Caco-2 (cell line): ENCODE measurements at regions of chr17 and their contacts with region 1.

Region 1: GRCh38 chr17:49616601-49617131 is 41.0 kb downstream of the NXPH3 start:
- DNase-seq: no peak
- H3K4me3 ChIP-seq: no peak overlapping the region
- H3K4me3 Mint-ChIP-seq: no peak overlapping the region
- H3K27ac Mint-ChIP-seq: no peak overlapping the region
- H3K4me1 ChIP-seq: peaks cover 20% of the 10 kb centered on the region
- H3K4me1 Mint-ChIP-seq: peaks cover 12% of the 10 kb centered on the region
- H3K27me3 ChIP-seq: no peaks in the 10 kb centered on the region
- H3K27me3 Mint-ChIP-seq: no peaks in the 10 kb centered on the region
- CTCF ChIP-seq: no peak

Region 2: DNA sequence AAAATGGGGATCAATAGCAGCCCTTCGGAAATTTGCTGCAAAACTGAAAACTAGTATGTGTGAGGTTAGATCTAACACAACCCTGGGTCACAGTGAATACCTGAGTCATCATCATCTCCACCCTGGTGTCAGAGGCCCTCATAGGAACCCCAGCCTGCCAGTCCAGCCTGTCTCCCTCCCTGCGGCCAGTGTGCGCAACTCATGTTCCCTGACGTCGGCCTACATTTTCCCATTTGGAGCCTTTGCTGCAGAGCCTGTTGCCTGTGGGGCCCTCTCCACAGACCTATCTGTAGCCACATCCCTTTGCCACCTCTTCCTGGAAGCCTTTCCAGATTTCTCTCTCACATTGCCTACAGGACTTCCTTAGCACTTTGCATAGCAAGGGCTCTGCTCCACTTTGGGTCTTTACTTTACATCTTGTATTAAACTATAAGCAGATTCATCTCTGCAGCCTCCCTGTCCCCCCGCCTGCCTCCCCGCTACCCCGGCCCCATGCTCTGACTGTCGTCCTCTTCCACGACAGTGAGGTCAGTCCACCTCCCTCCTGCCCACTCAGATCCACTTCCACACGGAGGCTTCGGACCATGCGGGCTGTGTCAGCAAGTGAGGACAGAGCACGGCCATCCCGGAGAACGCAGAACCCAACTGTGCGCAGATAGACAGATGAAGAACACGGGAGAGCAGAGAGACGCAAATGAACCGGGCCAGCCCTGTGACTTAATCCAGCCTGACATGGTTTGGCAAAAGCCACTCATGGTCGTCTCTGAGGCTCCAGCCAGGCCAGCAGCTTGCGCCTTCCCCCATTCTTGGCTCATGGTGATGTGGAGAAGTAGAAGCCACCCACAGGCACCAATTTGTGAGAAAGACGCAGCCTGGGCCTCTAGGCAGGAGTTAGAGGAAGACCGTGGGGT is 90.6 kb before region 1 on chr17:
- CTCF ChIA-PET with region 1: no interaction called
- POLR2A ChIA-PET with region 1: no interaction called
- intact Hi-C with region 1: no loop called
- DNase-seq: peak in 1 of 2 experiments; percentile 40
- H3K4me3 ChIP-seq: no peak overlapping the region
- H3K4me3 Mint-ChIP-seq: no peak overlapping the region
- H3K27ac Mint-ChIP-seq: no peak overlapping the region
- H3K4me1 ChIP-seq: no peaks in the 10 kb centered on the region
- H3K4me1 Mint-ChIP-seq: no peaks in the 10 kb centered on the region
- H3K27me3 ChIP-seq: no peaks in the 10 kb centered on the region
- H3K27me3 Mint-ChIP-seq: peaks cover 16% of the 10 kb centered on the region
- CTCF ChIP-seq: no peak

Region 3: GRCh38 chr17:49575579-49576087 is 41.0 kb before region 1 on chr17 and contains the start of gene NXPH3:
- CTCF ChIA-PET with region 1: interaction called, 10 read pairs
- POLR2A ChIA-PET with region 1: no interaction called
- intact Hi-C with region 1: loop called (anchors 1 kb)
- DNase-seq: peak; percentile 89 to 98
- H3K4me3 ChIP-seq: peak within 1 kb of the TSS; percentile 87
- H3K4me3 Mint-ChIP-seq: peak within 1 kb of the TSS; percentile 77
- H3K27ac Mint-ChIP-seq: no peak within 1 kb of the TSS
- H3K4me1 ChIP-seq: peaks cover 16% of the 10 kb centered on the region
- H3K4me1 Mint-ChIP-seq: peaks cover 14% of the 10 kb centered on the region
- H3K27me3 ChIP-seq: no peaks in the 10 kb centered on the region; the same call in 1 of the 2 replicates
- H3K27me3 Mint-ChIP-seq: peaks cover 22% of the 10 kb centered on the region
- CTCF ChIP-seq: peak; percentile 59 to 80
- total RNA-seq, gene NXPH3: 1.7 and 2.0 TPM in 2 replicates

Region 4: GRCh38 chr17:49629435-49629834 is 12.8 kb after region 1 on chr17:
- CTCF ChIA-PET with region 1: interaction called, 8 read pairs
- POLR2A ChIA-PET with region 1: no interaction called
- intact Hi-C with region 1: loop called (anchors 1 kb)
- DNase-seq: no peak
- H3K4me3 ChIP-seq: no peak overlapping the region
- H3K4me3 Mint-ChIP-seq: no peak overlapping the region
- H3K27ac Mint-ChIP-seq: no peak overlapping the region
- H3K4me1 ChIP-seq: peaks cover 31% of the 10 kb centered on the region
- H3K4me1 Mint-ChIP-seq: peaks cover 32% of the 10 kb centered on the region
- H3K27me3 ChIP-seq: no peaks in the 10 kb centered on the region
- H3K27me3 Mint-ChIP-seq: no peaks in the 10 kb centered on the region
- CTCF ChIP-seq: no peak

Region 5: DNA sequence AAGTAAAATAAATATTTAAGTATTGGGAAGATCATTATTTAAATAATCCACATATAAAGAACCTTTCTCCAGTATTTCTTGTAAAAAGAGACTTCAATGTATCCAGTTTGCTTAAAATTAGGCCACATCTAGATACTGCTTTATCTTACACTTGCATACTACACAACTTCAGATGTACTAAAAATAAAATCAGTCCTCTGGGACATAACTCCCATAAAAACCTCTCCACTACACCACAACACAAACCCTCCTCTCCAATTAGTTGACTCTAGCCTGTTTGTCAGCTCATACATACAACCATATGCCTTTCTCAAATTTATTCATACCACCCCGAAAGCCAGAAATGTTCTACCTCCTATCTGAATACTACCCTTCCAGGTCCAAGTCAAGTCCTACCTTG is 39.6 kb after region 1 on chr17:
- CTCF ChIA-PET with region 1: no interaction called
- POLR2A ChIA-PET with region 1: no interaction called
- intact Hi-C with region 1: no loop called
- DNase-seq: no peak
- H3K4me3 ChIP-seq: no peak overlapping the region
- H3K4me3 Mint-ChIP-seq: no peak overlapping the region
- H3K27ac Mint-ChIP-seq: no peak overlapping the region
- H3K4me1 ChIP-seq: no peaks in the 10 kb centered on the region
- H3K4me1 Mint-ChIP-seq: peaks cover 6% of the 10 kb centered on the region
- H3K27me3 ChIP-seq: no peaks in the 10 kb centered on the region
- H3K27me3 Mint-ChIP-seq: no peaks in the 10 kb centered on the region
- CTCF ChIP-seq: no peak

Region 6: DNA sequence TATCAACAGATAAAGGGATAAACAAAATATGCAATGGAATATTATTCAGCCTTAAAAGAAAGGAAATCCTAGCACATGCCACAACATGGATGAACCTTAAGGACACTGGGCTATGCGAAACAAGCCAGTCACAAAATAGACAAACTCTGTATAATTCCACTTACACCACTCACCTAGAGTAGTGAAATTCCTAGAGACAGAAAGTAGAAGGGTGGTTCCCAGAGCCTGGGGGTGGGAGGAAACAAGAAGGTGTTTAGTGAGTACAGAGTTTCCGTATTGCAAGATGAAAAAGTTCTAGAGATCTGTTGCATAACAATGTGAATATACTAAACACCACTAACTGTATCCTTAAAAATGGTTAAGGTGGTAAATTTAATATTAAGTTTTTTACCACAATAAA is 51.2 kb after region 1 on chr17:
- CTCF ChIA-PET with region 1: interaction called, 10 read pairs
- POLR2A ChIA-PET with region 1: interaction called, 4 read pairs
- intact Hi-C with region 1: no loop called
- DNase-seq: no peak
- H3K4me3 ChIP-seq: no peak overlapping the region
- H3K4me3 Mint-ChIP-seq: no peak overlapping the region
- H3K27ac Mint-ChIP-seq: no peak overlapping the region
- H3K4me1 ChIP-seq: no peaks in the 10 kb centered on the region
- H3K4me1 Mint-ChIP-seq: no peaks in the 10 kb centered on the region
- H3K27me3 ChIP-seq: no peaks in the 10 kb centered on the region
- H3K27me3 Mint-ChIP-seq: no peaks in the 10 kb centered on the region
- CTCF ChIP-seq: no peak

Region 7: GRCh38 chr17:49694847-49695683 is 78.4 kb after region 1 on chr17:
- CTCF ChIA-PET with region 1: no interaction called
- POLR2A ChIA-PET with region 1: no interaction called
- intact Hi-C with region 1: loop called (anchors 2 kb)
- DNase-seq: peak; percentile 69 to 84
- H3K4me3 ChIP-seq: no peak overlapping the region
- H3K4me3 Mint-ChIP-seq: peak overlapping the region; percentile 48
- H3K27ac Mint-ChIP-seq: no peak overlapping the region
- H3K4me1 ChIP-seq: no peaks in the 10 kb centered on the region; the same call in 1 of the 2 replicates
- H3K4me1 Mint-ChIP-seq: peaks cover 18% of the 10 kb centered on the region
- H3K27me3 ChIP-seq: no peaks in the 10 kb centered on the region
- H3K27me3 Mint-ChIP-seq: peaks cover 5% of the 10 kb centered on the region
- CTCF ChIP-seq: peak; percentile 99 to 100

Region 8: DNA sequence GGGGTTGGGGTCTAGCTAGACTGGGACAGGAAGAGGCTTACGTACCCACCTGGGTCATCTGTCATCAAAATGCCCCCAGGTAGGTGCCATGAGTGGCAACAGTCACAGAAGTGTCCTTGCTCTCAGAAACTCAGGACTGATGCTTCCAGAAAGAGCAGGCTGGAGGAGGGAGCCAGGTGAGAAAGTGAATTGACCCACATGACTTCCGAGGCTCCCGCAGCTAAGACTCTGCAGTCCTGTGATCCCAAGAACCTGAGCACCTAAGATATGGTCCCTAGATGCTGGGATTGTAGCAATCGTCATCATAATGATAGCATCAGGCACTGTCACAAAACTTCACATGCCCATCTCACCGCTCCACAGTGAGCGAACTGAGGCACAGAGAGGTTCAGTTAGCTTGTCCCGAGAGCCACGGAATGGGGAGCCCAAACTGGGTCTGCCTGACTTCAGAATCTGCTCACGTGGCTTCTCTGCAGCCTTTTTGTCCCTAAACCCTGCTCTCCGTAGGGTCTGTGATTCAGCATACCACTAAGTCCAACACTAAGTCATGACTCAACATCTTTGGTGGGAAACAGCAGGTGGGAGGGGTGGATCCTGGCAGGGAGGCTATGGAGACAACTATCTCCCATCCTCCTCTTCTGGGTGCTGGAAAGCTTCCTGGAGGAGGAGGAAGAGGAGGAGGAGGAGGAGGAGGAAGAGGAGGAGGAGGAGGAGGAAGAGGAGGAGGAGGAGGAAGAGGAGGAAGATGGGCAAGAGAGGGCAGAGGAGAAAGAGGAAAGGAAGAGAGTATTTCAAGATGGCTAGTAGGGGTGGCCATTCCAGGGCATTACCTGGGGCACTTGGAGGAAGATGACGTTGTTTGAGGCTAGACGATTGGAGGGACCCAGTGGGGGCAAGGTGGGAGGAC is 296.8 kb after region 1 on chr17:
- CTCF ChIA-PET with region 1: no interaction called
- POLR2A ChIA-PET with region 1: no interaction called
- intact Hi-C with region 1: no loop called
- DNase-seq: no peak
- H3K4me3 ChIP-seq: no peak overlapping the region
- H3K4me3 Mint-ChIP-seq: no peak overlapping the region
- H3K27ac Mint-ChIP-seq: peak overlapping the region; percentile 64
- H3K4me1 ChIP-seq: peaks cover 40% of the 10 kb centered on the region
- H3K4me1 Mint-ChIP-seq: peaks cover 53% of the 10 kb centered on the region
- H3K27me3 ChIP-seq: no peaks in the 10 kb centered on the region
- H3K27me3 Mint-ChIP-seq: no peaks in the 10 kb centered on the region
- CTCF ChIP-seq: no peak